Dorsolateral prefrontal cortex (tissue), 120 donors: ENCODE measurements at regions of chr1 and their contacts with region 1.

Region 1: DNA sequence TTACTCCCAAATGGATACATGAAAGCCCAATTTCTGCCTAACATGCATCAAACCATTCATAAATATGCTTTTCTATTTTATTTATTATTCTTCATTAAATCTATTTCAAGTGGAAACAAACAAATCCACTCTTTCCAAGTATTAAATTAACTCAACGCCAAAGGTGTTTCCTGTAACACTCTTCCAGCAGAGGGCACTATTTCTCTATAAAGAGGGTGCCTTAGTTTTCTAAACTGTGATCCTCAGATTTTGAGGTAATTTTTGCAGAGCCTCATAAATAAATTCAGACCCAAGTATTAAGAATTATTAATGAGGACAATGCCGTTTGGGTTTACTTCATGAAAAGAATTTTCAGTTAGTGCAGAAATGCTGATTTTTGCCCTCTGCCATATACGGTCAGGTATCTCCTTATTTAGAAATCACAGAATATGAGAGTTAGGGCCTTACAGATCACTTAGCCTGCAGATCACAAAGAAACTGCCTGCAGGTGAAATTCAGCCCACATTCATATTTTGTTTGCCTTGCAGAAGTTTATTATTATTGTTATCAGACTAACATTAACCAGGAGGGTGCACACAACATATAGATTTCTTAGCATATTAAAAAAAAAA is 40.1 kb upstream of the MYSM1 start:
- DNase-seq: no peak
- H3K4me3 ChIP-seq: no peak overlapping the region
- H3K27ac ChIP-seq: no peak overlapping the region
- H3K27me3 ChIP-seq: no peaks in the 10 kb centered on the region
- CTCF ChIP-seq: peak; percentile 75 to 99 (median 90)

Region 2: DNA sequence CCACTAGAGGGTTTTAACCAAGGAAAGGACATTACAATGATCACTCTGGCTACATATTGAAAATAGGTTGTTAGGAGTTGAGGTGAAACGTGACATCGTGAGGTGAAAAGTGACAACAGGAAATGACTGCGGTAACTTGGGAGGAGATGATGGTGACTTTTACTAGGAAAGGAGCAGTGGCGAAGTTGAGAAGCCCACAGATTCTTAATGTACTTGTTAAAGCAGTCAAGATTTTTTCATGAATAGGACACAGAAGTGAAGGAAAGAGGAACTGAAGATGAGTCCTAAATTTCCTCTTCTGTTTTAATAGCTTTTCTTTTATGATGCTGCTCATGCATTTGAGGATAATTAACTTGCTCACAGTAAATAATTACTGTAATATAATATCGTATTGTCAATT is 253.0 kb before region 1 on chr1:
- intact Hi-C with region 1: no loop called
- DNase-seq: no peak
- H3K4me3 ChIP-seq: no peak overlapping the region
- H3K27ac ChIP-seq: no peak overlapping the region
- H3K27me3 ChIP-seq: no peaks in the 10 kb centered on the region
- CTCF ChIP-seq: no peak

Region 3: GRCh38 chr1:59699227-59699847 is 959.4 kb after region 1 on chr1:
- intact Hi-C with region 1: loop called (anchors 1 to 2 kb)
- DNase-seq: peak in 1 of 10 donors; percentile 22
- H3K4me3 ChIP-seq: no peak overlapping the region
- H3K27ac ChIP-seq: peak overlapping the region in 1 of 59 donors; percentile 2
- H3K27me3 ChIP-seq: no peaks in the 10 kb centered on the region
- CTCF ChIP-seq: peak; percentile 89 to 98 (median 95)

Region 4: GRCh38 chr1:59759156-59759925 is 1019.4 kb after region 1 on chr1:
- intact Hi-C with region 1: loop called (anchors 2 to 10 kb)
- DNase-seq: peak; percentile 62 to 88 (median 82)
- H3K4me3 ChIP-seq: peak overlapping the region in 45 of 59 donors; percentile 3 to 59 (median 35)
- H3K27ac ChIP-seq: peak overlapping the region in 9 of 59 donors; percentile 8 to 59 (median 30)
- H3K27me3 ChIP-seq: no peaks in the 10 kb centered on the region
- CTCF ChIP-seq: peak; percentile 68 to 100 (median 96)